Ascending aorta (tissue), 2 donors: ENCODE measurements at regions of chr2 and their contacts with region 1.

Region 1: GRCh38 chr2:10477443-10478297 is 29.5 kb upstream of the ODC1 start:
- DNase-seq: no peak
- H3K4me3 ChIP-seq: no peak overlapping the region
- H3K27ac ChIP-seq: no peak overlapping the region
- H3K4me1 ChIP-seq: no peaks in the 10 kb centered on the region
- H3K27me3 ChIP-seq: no peaks in the 10 kb centered on the region
- CTCF ChIP-seq: no peak

Region 2: GRCh38 chr2:11796190-11797171 is 1318.8 kb after region 1 on chr2:
- intact Hi-C with region 1: loop called (anchors 5 kb)
- DNase-seq: no peak
- H3K4me3 ChIP-seq: no peak overlapping the region
- H3K27ac ChIP-seq: no peak overlapping the region
- H3K4me1 ChIP-seq: no peaks in the 10 kb centered on the region
- H3K27me3 ChIP-seq: no peaks in the 10 kb centered on the region
- CTCF ChIP-seq: no peak